ENCODE measurements at regions of chr18 and their contacts with region 1.

Region 1: DNA sequence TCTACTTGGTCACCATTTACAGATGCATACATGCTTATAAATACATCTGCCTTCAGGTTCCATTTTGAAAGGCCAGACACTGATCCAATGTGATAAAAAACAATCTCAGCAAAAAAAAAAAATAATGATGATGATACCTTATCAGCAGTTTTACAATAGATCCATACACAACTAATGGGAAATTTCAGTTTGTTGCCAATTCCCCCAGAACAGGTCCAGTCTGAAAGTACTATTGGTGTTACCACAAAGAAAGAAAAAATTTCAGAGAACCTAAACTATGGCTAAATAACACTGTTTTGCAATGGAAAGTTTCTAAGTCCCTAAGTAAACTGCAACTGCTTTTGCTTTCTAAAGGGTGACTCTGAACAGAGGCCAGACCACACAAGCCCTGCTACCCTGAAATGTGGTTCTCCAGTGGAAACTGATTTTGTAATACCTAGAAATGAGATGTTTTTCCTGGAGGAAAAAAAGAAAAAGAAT is 54.1 kb downstream of the LPIN2 start:
- DNase-seq: peak; percentile 78
- ATAC-seq: peak; percentile 56
- H3K4me3 Mint-ChIP-seq: peak overlapping the region; percentile 72
- H3K27ac Mint-ChIP-seq: peak overlapping the region; percentile 95
- H3K4me1 Mint-ChIP-seq: peaks cover 89% of the 10 kb centered on the region
- H3K27me3 Mint-ChIP-seq: no peaks in the 10 kb centered on the region

Region 2: DNA sequence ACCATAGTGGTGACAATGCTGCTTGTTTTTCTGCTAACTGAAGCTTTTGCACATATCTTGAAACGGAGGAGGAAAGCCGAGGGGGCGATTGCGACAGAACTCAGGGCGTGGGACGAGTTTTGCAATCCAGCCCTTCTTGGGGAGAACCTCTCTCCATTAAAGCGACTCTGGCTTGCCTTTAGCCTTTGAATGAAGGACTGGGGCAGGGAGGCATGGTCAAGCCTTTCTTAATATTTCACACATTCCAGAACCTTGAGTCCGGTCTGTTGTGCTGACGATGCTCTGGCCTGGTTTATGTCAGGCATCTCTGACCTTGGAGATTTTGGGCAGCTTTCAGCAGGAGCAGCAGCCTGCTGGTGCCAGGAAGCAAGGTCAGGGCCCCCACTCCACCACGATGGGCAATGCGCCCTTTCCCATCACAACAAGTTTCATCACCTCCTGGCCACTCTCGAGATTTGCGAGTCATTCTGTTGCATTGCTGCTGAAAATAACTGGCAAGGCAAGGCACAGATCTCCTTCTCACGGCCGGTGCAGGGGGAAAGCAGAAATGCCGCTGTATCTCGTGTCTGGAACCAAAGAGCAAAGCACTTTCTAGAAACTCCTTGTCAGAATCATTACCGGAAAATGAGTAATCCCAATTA is 101.2 kb before region 1 on chr18:
- CTCF ChIA-PET with region 1: no interaction called
- POLR2A ChIA-PET with region 1: no interaction called
- DNase-seq: no peak
- ATAC-seq: no peak
- H3K4me3 Mint-ChIP-seq: no peak overlapping the region
- H3K27ac Mint-ChIP-seq: no peak overlapping the region
- H3K4me1 Mint-ChIP-seq: peaks cover 2% of the 10 kb centered on the region
- H3K27me3 Mint-ChIP-seq: peaks cover 25% of the 10 kb centered on the region

Region 3: GRCh38 chr18:2971741-2972552 is 13.1 kb after region 1 on chr18:
- CTCF ChIA-PET with region 1: interaction called, 92 read pairs
- POLR2A ChIA-PET with region 1: interaction called, 98 read pairs
- DNase-seq: peak; percentile 86
- ATAC-seq: peak; percentile 75
- H3K4me3 Mint-ChIP-seq: peak overlapping the region; percentile 76
- H3K27ac Mint-ChIP-seq: peak overlapping the region; percentile 96
- H3K4me1 Mint-ChIP-seq: peaks cover 91% of the 10 kb centered on the region
- H3K27me3 Mint-ChIP-seq: no peaks in the 10 kb centered on the region

Region 4: DNA sequence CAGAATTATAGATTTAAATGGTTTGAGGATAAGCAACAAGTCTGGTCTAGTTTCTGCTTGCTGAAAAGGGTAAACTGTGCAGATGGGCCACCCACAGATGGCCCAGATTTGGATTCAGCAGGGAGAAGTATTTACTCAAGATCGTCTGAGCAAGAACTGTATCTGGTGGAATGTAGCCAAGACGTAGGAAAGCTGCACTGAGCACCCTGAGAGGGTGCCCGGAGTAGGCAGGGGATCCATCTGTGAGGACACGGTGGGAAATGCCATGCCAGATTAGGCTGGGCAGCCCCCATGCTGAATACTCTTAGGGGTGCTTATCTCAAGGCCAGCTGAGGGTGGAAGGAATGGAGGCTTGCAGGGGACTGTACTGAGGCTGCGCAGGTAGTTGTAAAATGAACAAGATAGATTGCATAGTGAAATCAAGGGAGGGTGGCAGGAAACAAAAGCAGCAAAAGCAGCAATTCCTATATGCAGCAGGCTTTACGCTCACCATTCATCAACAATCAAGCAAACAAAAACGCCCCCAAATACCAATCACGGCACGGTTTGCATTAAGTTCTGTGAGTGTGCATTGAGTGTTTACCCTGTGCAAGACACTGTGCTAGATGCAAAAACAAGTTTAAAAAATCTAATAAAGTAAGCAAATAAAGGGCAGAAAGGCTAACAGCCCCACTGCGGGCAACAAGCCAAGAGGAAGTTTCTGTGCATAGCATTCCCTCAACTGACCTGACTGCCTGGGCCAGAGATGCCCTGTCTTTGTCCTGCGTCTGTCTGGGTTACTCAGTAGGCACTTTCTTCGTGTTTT is 86.2 kb after region 1 on chr18:
- CTCF ChIA-PET with region 1: no interaction called
- POLR2A ChIA-PET with region 1: no interaction called
- DNase-seq: no peak
- ATAC-seq: no peak
- H3K4me3 Mint-ChIP-seq: no peak overlapping the region
- H3K27ac Mint-ChIP-seq: no peak overlapping the region
- H3K4me1 Mint-ChIP-seq: peaks cover 19% of the 10 kb centered on the region
- H3K27me3 Mint-ChIP-seq: no peaks in the 10 kb centered on the region

Measured in activated CD8-positive, alpha-beta T cell treated with anti-CD3 and anti-CD28 coated beads, Interleukin-2, amount 10 ng/mL, durations not matched to agents 7 days and 5 days (primary cell).